Endothelial cell of umbilical vein (primary cell): ENCODE measurements at regions of chr1 and their contacts with region 1.

Region 1: DNA sequence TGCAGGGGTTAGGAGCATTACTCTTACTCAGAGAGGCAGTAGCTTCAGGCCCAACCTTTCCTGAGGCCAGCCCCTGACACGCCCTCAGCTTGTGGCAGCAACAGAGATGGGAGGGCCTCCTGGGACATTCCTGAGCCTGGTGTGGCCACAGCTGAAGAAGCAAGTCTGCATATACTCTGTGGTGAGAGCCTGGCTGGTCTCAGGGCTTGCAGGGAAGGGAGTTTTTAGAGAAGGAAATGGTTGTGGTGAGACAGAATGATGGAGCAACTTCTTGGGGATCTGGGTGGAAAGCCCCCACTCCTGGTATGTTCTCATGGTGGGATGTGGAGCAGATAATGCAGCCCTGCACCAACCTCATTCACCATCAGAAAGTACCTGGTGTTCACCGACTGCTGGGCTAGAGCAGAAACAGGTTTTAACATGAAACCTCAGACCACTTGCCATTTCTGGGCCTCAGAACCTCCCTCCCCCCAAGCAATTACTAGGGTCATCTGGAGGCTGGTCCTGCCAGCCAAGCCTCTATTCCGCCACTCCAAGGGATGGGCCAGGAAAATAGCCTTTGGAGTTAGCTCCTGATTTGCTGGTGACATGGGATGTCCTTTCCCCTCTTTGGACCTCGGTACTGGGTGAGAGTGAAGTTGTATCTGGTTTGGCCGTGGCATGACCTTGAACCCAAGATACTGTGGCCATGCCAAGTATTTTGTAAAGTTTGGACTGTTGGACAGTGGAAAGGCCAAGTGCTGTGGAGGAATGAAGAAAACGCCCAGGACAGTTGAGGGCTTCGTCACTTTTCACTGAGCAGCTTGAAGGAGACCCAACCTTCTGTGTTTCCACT is 28.1 kb upstream of the RNF19B start:
- DNase-seq: peak; percentile 46
- H3K4me3 ChIP-seq: no peak overlapping the region
- H3K27ac ChIP-seq: peak overlapping the region; percentile 36
- H3K4me1 ChIP-seq: peaks cover 41% of the 10 kb centered on the region
- H3K27me3 ChIP-seq: no peaks in the 10 kb centered on the region
- CTCF ChIP-seq: no peak
- POLR2A ChIP-seq: no peak

Region 2: DNA sequence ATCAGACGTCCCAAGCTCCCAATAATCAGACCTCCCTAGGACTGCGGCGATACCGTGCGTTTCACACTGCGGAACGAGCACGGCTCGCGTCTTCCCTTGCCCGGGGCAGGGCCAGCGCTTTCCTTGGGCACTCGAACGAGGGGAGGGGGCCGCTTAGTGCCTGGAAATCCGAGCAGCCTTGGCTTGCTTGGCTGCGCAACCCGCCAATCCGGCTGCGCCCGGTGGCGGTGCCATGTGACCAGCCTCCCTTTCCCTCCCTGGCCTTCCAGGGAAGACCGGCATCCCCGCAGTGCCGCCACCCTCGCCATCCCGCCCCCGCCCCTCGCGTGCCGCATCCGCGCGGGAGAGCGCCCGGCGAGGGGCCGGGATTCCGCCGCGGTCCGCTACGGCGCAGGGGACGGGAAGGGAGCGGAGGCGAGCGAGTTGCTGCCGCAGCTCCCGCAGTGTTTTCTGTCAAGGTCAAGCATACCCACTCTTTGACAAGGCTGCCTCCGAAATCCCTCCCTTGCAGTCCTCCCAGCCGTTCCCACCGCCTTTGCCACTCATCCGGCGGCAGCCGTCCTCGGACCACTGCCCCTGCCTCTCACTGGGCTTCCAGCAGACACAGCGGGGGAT is 19.8 kb before region 1 on chr1:
- CTCF ChIA-PET with region 1: interaction called, 4 read pairs
- POLR2A ChIA-PET with region 1: no interaction called
- dilution Hi-C with region 1: no loop called
- intact Hi-C with region 1: loop called (anchors 1 kb)
- DNase-seq: peak; percentile 88
- H3K4me3 ChIP-seq: peak overlapping the region in 2 of 3 experiments; percentile 18 to 56
- H3K27ac ChIP-seq: no peak overlapping the region
- H3K4me1 ChIP-seq: no peaks in the 10 kb centered on the region
- H3K27me3 ChIP-seq: no peaks in the 10 kb centered on the region
- CTCF ChIP-seq: no peak
- POLR2A ChIP-seq: peak; percentile 15